ENCODE measurements at regions of chr2 and their contacts with region 1.

Region 1: DNA sequence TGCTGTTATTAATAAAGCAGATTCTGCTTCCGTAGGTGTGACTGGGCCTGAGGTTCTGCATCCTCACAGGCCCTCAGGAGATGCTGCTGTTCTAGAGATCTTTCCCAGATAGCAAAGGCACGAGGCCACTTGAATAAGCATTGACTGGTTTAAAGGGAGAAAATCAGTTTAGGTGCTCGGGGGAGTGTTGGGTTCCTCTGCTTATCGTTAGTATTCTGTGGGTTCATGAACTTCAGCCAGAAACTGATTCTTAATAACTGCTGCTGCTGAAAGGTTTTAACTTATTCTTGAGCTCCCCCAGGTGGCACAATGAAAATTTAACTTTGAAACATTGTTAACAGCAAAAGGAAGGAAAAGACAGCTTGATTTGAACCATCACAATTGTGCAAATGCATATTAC is 56.9 kb downstream of the ITGA6 start:
- DNase-seq: no peak
- ATAC-seq: no peak
- H3K4me3 Mint-ChIP-seq: no peak overlapping the region
- H3K27ac Mint-ChIP-seq: peak overlapping the region; percentile 2
- H3K4me1 Mint-ChIP-seq: peaks cover 28% of the 10 kb centered on the region
- H3K27me3 Mint-ChIP-seq: no peaks in the 10 kb centered on the region

Region 2: GRCh38 chr2:172172513-172173173 is 311.6 kb before region 1 on chr2:
- CTCF ChIA-PET with region 1: interaction called, 14 read pairs
- POLR2A ChIA-PET with region 1: no interaction called
- DNase-seq: peak; percentile 69
- ATAC-seq: peak; percentile 98
- H3K4me3 Mint-ChIP-seq: peak overlapping the region; percentile 52
- H3K27ac Mint-ChIP-seq: no peak overlapping the region
- H3K4me1 Mint-ChIP-seq: peaks cover 9% of the 10 kb centered on the region
- H3K27me3 Mint-ChIP-seq: peaks cover 18% of the 10 kb centered on the region

Region 3: DNA sequence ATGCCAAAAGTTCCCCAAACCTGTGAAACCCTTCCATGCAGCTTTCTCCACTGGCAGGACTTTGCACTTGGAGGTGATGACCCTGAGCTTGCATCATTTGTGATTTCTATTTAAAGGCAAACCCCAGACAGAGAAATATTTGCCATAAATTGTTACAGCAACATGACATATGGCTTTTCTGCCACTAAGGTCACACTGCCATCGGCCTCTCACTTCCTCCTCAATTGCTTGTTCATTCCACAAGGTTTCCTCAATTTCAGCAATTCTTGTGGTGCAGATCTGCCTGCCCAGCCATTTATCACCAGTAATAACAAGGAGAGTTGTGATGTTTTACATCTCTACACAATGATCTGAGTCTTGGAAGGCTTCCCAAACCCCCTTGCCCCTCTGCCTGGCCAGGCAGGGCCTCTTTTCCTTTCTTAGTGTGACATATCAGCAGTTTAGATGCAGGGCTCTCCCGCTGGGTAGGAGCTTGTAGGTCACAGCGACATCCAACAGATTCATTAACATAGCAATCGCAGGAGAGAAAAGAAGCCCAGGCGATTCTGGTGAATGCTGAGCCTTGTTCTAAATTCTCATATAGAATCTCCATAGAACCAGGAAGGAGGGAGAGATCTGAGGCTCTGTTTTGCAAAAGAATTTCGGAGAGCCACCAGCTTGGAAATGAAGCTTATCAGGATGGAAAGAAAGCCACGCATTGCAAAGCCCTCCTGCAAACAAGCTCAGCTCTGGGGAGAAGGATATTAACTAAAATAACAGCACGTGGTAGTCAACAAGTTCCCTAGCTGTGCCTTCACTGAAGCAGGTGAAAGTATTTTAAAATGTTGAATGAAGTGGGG is 103.6 kb before region 1 on chr2:
- CTCF ChIA-PET with region 1: no interaction called
- POLR2A ChIA-PET with region 1: no interaction called
- DNase-seq: no peak
- ATAC-seq: no peak
- H3K4me3 Mint-ChIP-seq: no peak overlapping the region
- H3K27ac Mint-ChIP-seq: no peak overlapping the region
- H3K4me1 Mint-ChIP-seq: no peaks in the 10 kb centered on the region
- H3K27me3 Mint-ChIP-seq: no peaks in the 10 kb centered on the region

Region 4: GRCh38 chr2:172472446-172473033 is 11.7 kb before region 1 on chr2:
- CTCF ChIA-PET with region 1: interaction called, 138 read pairs
- POLR2A ChIA-PET with region 1: no interaction called
- DNase-seq: peak; percentile 58
- ATAC-seq: peak; percentile 73
- H3K4me3 Mint-ChIP-seq: peak overlapping the region; percentile 5
- H3K27ac Mint-ChIP-seq: peak overlapping the region; percentile 43
- H3K4me1 Mint-ChIP-seq: peaks cover 17% of the 10 kb centered on the region
- H3K27me3 Mint-ChIP-seq: no peaks in the 10 kb centered on the region

Region 5: DNA sequence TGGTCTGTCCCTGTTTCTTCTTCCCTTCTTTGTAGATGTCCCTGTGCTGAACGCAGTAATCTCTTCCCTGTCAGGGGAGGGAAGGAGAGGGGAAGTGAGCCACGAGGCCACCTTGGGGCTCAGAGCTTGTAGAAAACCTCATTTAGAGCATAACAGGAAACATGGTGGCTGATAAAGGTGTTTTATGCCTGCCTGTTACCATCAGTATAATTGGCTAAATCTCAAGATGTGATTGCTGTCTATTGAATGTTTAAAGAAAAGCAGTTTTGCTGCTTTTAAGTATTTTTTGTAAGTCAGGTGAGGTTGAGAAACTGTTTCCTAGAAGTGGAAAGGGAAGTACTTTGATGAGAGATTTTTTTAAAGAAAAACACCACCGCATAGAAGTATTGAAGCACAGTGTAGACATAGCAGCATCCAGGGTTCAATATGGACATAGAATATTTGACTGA is 11.9 kb after region 1 on chr2:
- CTCF ChIA-PET with region 1: interaction called, 21 read pairs
- POLR2A ChIA-PET with region 1: no interaction called
- DNase-seq: peak; percentile 35
- ATAC-seq: peak; percentile 82
- H3K4me3 Mint-ChIP-seq: peak overlapping the region; percentile 47
- H3K27ac Mint-ChIP-seq: peak overlapping the region; percentile 95
- H3K4me1 Mint-ChIP-seq: peaks cover 29% of the 10 kb centered on the region
- H3K27me3 Mint-ChIP-seq: no peaks in the 10 kb centered on the region

Region 6: GRCh38 chr2:172710584-172711024 is 226.4 kb after region 1 on chr2:
- CTCF ChIA-PET with region 1: interaction called, 14 read pairs
- POLR2A ChIA-PET with region 1: no interaction called
- DNase-seq: peak; percentile 59
- ATAC-seq: no peak
- H3K4me3 Mint-ChIP-seq: no peak overlapping the region
- H3K27ac Mint-ChIP-seq: no peak overlapping the region
- H3K4me1 Mint-ChIP-seq: no peaks in the 10 kb centered on the region
- H3K27me3 Mint-ChIP-seq: peaks cover 9% of the 10 kb centered on the region